Activated CD4-positive, alpha-beta T cell treated with anti-CD3 and anti-CD28 coated beads for 36 hours (primary cell): ENCODE measurements at regions of chr22 and their contacts with region 1.

Region 1: DNA sequence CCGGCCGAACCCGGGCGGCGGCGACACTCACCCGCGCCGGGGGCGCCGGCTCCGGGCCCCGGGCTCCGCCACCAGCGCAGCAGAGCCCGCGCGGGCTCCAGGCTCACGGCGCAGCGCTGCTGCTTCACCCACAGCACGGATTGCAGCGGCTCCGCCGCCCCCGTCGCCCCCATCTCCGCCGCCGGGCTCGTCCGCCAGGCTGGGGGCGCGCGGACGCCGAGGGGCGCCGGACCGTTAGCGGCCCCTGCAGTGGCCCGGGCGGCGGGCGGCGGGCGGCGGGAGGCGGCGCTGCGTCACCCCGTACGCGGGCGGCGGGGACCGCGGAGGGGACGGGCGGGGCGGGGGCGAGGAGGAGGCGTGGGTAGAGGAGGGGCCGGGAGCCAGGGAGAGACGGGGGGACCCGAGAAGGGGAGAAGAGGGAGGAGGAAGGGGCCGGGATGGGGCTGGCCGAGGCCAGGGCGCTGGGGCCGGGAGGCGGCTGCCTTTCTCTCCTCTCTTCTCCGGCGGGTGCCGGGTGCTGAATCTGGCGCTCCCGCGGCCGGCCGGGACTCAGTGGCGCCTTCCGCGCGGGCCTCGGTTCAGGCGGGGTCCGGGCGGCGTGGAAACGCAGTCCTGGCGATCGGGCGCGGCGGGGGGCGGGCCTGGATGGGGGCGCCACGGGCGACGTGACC is at the start of gene CERK:
- DNase-seq: peak; percentile 76
- ATAC-seq: peak; percentile 24
- H3K4me3 Mint-ChIP-seq: peak within 1 kb of the TSS; percentile 99
- H3K27ac Mint-ChIP-seq: peak within 1 kb of the TSS; percentile 97
- H3K4me1 Mint-ChIP-seq: peaks cover 39% of the 10 kb centered on the region
- H3K27me3 Mint-ChIP-seq: no peaks in the 10 kb centered on the region
- total RNA-seq, gene CERK: 27.0 to 32.8 TPM

Region 2: GRCh38 chr22:46576556-46577367 is 161.3 kb before region 1 on chr22:
- CTCF ChIA-PET with region 1: no interaction called
- POLR2A ChIA-PET with region 1: no interaction called
- intact Hi-C with region 1: loop called in 1 of 2 experiments (anchors 1 kb)
- DNase-seq: peak; percentile 72
- ATAC-seq: peak; percentile 72
- H3K4me3 Mint-ChIP-seq: peak overlapping the region; percentile 73
- H3K27ac Mint-ChIP-seq: no peak overlapping the region
- H3K4me1 Mint-ChIP-seq: peaks cover 38% of the 10 kb centered on the region
- H3K27me3 Mint-ChIP-seq: no peaks in the 10 kb centered on the region

Region 3: GRCh38 chr22:46646531-46647215 is 91.4 kb before region 1 on chr22:
- CTCF ChIA-PET with region 1: no interaction called
- POLR2A ChIA-PET with region 1: no interaction called
- intact Hi-C with region 1: no loop called
- DNase-seq: no peak
- ATAC-seq: no peak
- H3K4me3 Mint-ChIP-seq: no peak overlapping the region
- H3K27ac Mint-ChIP-seq: no peak overlapping the region
- H3K4me1 Mint-ChIP-seq: peaks cover 2% of the 10 kb centered on the region
- H3K27me3 Mint-ChIP-seq: no peaks in the 10 kb centered on the region

Region 4: DNA sequence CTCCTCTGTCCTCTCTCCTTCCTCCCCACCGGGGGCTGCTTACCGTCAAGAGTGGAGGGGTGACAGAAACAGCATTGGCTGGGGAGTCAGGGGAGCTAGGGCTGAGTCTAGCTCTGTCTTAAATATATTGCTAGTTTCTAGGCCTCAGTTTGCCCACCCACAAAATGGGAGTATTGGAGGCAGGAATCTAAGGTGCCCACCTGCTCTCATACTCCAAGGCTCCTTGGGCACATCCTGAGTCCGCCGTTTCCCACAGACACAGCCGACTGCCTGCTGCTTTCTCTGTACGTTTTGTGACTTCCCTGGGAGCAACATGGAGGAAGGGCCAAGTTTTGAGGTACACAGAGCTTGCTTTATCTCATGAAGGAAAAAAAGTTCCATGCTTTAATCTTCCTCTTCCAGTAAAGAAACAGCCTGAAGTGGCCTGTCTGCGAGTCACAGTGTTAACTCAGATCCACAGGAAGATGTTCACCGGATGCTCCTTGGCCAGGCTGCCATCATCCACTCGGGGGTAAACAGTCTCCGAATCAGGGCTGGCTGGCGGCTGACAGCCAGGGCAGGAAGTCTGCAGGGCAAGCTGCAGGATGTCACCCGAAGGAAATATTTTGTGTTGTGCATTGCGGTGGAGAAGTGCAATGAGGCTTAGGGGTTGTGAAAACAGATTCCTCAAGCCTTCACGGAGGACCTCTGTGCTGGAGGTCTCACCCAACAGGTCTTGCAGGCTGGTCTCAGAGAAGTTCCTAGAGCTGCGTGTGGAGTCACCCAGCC is 11.0 kb after region 1 on chr22:
- CTCF ChIA-PET with region 1: interaction called, 13 read pairs
- POLR2A ChIA-PET with region 1: interaction called, 3 read pairs
- intact Hi-C with region 1: no loop called
- DNase-seq: peak; percentile 65
- ATAC-seq: peak; percentile 68
- H3K4me3 Mint-ChIP-seq: peak overlapping the region; percentile 62
- H3K27ac Mint-ChIP-seq: peak overlapping the region; percentile 91
- H3K4me1 Mint-ChIP-seq: peaks cover 25% of the 10 kb centered on the region
- H3K27me3 Mint-ChIP-seq: no peaks in the 10 kb centered on the region

Region 5: DNA sequence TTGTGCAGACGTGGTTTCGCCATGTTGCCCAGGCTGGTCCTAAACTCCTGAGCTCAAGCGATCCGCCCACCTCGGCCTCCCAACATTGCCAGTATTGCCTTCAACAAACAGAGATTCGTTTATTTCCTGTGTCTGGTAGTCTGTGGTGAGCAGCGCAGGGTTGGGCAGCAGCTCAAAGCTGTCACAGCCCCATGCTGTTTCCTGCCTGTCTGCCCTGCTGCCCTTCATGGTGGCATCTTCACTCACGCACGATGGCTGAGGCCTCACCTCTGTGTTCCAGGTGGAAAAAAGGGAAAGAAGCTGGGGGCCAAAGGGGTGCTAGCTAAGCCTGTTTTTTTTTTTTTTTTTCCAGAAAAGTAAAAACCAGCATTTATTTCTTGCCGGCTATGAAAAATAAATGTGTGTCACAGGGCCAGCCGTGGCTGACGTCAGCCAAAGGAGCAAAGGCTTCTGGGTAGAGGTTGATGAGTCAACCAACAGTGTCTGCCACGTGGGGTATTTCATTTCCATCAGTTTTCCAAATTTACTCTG is 53.2 kb after region 1 on chr22:
- CTCF ChIA-PET with region 1: no interaction called
- POLR2A ChIA-PET with region 1: no interaction called
- intact Hi-C with region 1: loop called in 1 of 2 experiments (anchors 1 kb)
- DNase-seq: peak; percentile 88
- ATAC-seq: peak; percentile 93
- H3K4me3 Mint-ChIP-seq: peak overlapping the region; percentile 73
- H3K27ac Mint-ChIP-seq: peak overlapping the region; percentile 96
- H3K4me1 Mint-ChIP-seq: peaks cover 51% of the 10 kb centered on the region
- H3K27me3 Mint-ChIP-seq: no peaks in the 10 kb centered on the region

Region 6: GRCh38 chr22:48098243-48098920 is 1360.3 kb after region 1 on chr22:
- CTCF ChIA-PET with region 1: no interaction called
- POLR2A ChIA-PET with region 1: no interaction called
- intact Hi-C with region 1: loop called in 1 of 2 experiments (anchors 5 kb)
- DNase-seq: peak; percentile 43
- ATAC-seq: peak; percentile 93
- H3K4me3 Mint-ChIP-seq: no peak overlapping the region
- H3K27ac Mint-ChIP-seq: peak overlapping the region; percentile 45
- H3K4me1 Mint-ChIP-seq: peaks cover 21% of the 10 kb centered on the region
- H3K27me3 Mint-ChIP-seq: peaks cover 5% of the 10 kb centered on the region